Heart left ventricle (tissue), 16 donors: ENCODE measurements at regions of chr2 and their contacts with region 1.

Region 1: DNA sequence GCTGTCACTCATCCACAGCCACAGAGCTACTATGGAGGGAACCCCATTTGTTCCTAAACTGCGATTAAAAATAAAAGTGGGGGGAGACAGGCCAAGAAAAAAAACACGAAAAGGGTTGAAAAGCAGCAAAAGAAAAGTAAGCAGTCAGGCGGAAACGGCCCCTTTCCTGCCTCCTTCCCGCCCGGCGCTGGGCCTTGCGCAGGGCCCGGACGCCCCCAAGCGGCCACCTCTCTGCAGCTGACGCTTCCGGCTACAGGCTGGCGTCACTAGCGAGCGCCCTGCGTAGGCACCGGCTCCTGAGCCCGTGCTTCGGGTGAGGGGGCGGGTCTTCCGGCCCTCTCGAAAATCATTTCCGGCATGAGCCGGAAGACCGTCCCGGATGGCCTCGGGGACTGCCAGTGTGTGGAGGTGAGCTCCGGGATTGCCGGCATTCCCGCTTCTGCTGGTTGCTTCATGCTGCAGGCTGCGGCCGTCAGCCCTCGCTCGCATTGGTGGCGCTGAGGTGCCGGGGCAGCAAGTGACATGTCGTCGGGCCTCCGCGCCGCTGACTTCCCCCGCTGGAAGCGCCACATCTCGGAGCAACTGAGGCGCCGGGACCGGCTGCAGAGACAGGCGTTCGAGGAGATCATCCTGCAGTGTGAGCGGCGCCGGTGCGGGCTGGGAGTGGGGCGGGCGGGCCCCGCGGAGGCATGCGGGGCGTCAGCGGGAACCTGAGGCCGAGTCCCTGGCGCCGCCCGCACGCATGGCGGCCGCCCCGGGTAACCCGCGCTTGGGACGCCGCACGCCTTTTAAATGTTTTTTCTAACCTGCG is at the start of gene ATG16L1:
- DNase-seq: peak; percentile 94 to 98 (median 97)
- ATAC-seq: peak; percentile 99 to 100 (median 100)
- H3K4me3 ChIP-seq: peak within 1 kb of the TSS; percentile 73 to 99 (median 88)
- H3K27ac ChIP-seq: peak within 1 kb of the TSS in 11 of 12 donors; percentile 67 to 94 (median 85)
- H3K4me1 ChIP-seq: peaks cover 0 to 75% (median 20%) of the 10 kb centered on the region in 12 donors
- H3K27me3 ChIP-seq: no peaks in the 10 kb centered on the region
- CTCF ChIP-seq: peak; percentile 86 to 99 (median 97)
- POLR2A ChIP-seq: peak in 1 of 2 donors; percentile 83
- total RNA-seq, gene ATG16L1: 13.7 to 22.2 (median 15.8) TPM

Region 2: DNA sequence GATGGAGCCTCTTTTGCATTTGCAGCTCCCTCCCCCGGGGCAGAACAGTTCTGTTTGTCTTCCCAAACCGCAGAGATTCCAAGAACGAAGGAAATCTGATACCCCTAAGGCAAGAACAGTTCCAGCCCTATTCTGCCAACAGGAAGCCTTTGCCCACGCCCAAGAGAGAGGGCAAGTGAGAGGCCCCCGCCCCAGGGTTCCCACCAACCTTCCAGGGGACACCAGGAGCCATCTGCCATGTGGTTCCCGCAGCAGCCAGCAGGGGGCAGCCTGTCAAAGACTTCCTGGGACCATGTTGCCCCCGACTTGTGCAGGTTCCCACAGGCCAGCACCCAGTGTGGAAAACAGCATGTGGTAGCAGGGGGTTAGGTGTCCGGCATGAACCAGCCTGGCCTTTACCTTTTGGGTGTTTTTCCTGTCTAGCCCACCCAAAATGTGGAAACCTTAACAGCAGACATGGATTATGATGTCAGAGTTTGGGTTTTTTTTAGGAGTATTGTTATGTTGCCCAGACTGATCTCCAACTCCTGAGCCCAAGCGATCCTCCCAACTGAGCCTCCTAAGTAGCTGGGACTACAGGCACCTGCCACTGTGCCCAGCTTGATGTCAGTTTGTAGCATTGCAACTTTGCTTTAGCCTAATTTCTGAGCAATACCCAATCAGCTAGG is 639.8 kb before region 1 on chr2:
- intact Hi-C with region 1: loop called in 9 of 10 experiments (anchors 2 to 10 kb)
- DNase-seq: peak; percentile 48 to 84 (median 57)
- ATAC-seq: peak in 3 of 4 donors; percentile 65 to 73 (median 69)
- H3K4me3 ChIP-seq: no peak overlapping the region
- H3K27ac ChIP-seq: no peak overlapping the region
- H3K4me1 ChIP-seq: peaks cover 0 to 6% (median 0%) of the 10 kb centered on the region in 12 donors
- H3K27me3 ChIP-seq: no peaks in the 10 kb centered on the region
- CTCF ChIP-seq: peak; percentile 68 to 85 (median 78)
- POLR2A ChIP-seq: no peak

Region 3: DNA sequence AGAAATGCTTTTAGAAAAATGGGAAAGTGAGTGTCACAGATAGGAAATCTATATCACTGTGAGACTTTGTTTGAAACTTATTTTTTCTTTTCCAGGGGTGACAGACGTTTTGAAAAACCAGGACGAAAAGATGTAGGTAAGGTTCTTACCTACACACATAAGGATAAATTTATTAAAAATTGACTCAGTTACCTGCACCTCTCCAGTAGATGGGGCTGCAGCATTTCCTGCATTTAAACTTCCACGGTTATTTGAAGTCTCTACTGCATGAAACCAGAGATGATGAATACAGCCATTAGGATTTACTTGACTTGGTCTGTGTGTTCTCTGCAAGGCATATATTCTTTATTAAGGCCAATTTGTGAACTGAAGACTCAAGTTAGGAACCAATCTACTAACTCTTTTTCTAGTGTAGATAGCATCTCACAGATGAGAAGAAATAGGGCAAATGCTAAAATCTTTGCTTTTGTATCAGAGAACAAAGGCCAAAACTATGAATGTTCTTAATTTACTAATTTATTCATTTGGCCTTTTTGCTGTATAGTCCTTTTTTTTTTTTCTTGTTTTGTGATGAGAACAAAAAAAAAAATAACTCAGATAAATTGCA is 490.1 kb before region 1 on chr2:
- intact Hi-C with region 1: loop called in 1 of 10 experiments (anchors 10 kb)
- DNase-seq: no peak
- ATAC-seq: no peak
- H3K4me3 ChIP-seq: no peak overlapping the region
- H3K27ac ChIP-seq: no peak overlapping the region
- H3K4me1 ChIP-seq: no peaks in the 10 kb centered on the region
- H3K27me3 ChIP-seq: no peaks in the 10 kb centered on the region
- CTCF ChIP-seq: peak in 10 of 12 donors; percentile 15 to 51 (median 38)
- POLR2A ChIP-seq: no peak

Region 4: GRCh38 chr2:232854082-232854481 is 397.4 kb before region 1 on chr2:
- intact Hi-C with region 1: loop called in 9 of 10 experiments (anchors 2 to 5 kb)
- DNase-seq: no peak
- ATAC-seq: no peak
- H3K4me3 ChIP-seq: no peak overlapping the region
- H3K27ac ChIP-seq: peak overlapping the region in 1 of 12 donors; percentile 10
- H3K4me1 ChIP-seq: peaks cover 0 to 17% (median 0%) of the 10 kb centered on the region in 12 donors
- H3K27me3 ChIP-seq: no peaks in the 10 kb centered on the region
- CTCF ChIP-seq: no peak
- POLR2A ChIP-seq: no peak

Region 5: DNA sequence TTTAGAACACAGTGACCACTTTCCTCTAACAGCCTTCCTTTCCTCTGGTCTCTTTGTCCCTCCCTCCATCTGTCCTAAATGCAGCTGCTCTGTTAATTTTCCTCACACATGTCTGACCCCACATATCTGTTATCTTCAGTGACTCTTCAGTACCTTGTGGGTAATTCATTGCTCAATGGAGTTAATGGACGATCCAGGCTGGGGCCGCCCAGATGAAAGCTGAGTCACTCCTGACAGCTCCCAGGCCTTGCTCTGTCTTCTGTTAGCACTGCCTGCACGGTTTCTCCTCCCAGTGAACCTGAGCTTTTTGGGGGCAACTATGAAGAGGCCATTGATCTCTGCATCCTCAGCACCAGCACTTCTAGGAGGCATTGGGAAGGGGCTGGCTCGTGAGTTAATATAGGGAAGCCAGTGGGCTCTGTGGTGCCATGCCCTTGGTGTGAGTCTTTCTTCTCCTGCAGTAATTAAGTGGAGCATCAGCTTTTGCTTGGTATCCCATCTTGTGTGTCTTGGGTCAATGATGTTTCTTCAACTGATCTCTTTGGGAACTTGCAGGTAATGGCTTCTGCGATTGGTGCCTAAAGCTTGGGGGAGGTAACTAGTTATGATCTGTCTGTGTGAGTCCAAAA is 314.1 kb before region 1 on chr2:
- intact Hi-C with region 1: no loop called
- DNase-seq: no peak
- ATAC-seq: no peak
- H3K4me3 ChIP-seq: no peak overlapping the region
- H3K27ac ChIP-seq: no peak overlapping the region
- H3K4me1 ChIP-seq: no peaks in the 10 kb centered on the region
- H3K27me3 ChIP-seq: peaks cover 0 to 13% (median 0%) of the 10 kb centered on the region in 9 donors
- CTCF ChIP-seq: no peak
- POLR2A ChIP-seq: no peak

Region 6: GRCh38 chr2:233100192-233100998 is 151.1 kb before region 1 on chr2:
- intact Hi-C with region 1: loop called in 6 of 10 experiments (anchors 2 to 5 kb)
- DNase-seq: no peak
- ATAC-seq: no peak
- H3K4me3 ChIP-seq: no peak overlapping the region
- H3K27ac ChIP-seq: peak overlapping the region in 1 of 12 donors; percentile 12
- H3K4me1 ChIP-seq: peaks cover 0 to 21% (median 0%) of the 10 kb centered on the region in 12 donors
- H3K27me3 ChIP-seq: no peaks in the 10 kb centered on the region
- CTCF ChIP-seq: no peak
- POLR2A ChIP-seq: no peak